ENCODE measurements at regions of chr11 and their contacts with region 1.

Region 1: DNA sequence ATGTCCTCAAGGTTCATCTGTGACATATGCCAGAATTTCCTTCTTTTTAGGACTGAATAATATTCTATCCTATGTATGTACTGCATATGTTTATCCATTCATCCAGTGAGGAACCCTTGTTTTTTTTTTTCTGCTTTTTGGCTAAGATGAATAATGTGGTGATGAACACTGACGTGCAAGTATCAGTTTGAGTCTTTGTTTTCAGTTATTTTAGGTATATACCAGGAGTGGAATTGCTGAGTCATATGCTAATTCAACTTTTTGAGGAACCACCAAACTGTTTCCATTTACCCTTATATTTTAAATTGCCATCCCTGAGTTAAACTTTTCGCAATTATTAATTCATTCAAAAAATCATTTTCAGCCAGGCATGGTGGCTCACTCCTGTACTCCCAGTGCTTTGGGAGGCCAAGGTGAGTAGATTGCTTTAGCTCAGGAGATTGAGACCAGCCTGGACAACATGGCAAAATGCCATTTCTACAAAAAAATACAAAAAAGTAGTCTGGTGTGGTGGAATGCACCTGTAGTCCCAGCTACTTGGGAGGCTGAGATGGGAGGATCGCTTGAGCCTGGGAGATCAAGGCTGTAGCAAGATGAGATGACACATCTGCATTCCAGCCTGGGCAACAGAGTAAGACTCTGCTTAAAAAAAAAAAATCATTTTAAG is 64.2 kb downstream of the MICAL2 start:
- DNase-seq: no peak
- H3K4me3 Mint-ChIP-seq: peak overlapping the region; percentile 27
- H3K27ac Mint-ChIP-seq: peak overlapping the region; percentile 93
- H3K4me1 Mint-ChIP-seq: peaks cover 68% of the 10 kb centered on the region
- H3K27me3 Mint-ChIP-seq: no peaks in the 10 kb centered on the region

Region 2: DNA sequence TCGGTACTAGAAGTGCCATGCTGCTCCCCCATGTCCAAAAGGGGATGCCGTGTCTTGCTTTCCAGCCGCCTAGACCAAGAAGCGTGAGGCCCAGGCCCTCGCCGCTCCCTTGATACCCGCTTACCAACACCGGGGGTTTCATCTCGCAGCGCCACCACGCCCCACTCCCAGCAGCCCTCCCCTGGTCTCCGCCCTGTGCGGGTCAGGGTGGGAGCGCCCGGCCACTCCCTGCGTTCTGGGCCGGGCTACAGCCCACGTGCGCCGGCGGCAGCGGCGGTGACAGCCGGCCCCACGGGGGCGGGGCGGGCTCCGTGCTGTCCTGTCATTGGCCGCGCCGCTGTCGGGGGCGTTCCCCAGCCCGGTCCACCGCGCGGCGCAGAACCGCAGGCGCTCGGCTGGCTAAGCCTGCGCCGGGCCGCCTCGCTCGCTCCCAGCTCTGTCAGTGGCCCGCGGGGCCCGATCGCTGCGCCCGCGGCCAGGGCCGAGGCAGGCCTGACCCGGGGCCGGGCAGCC is 64.4 kb before region 1 on chr11 and contains the start of gene MICAL2:
- CTCF ChIA-PET with region 1: no interaction called
- POLR2A ChIA-PET with region 1: no interaction called
- intact Hi-C with region 1: loop called (anchors 1 kb)
- DNase-seq: peak; percentile 91
- H3K4me3 Mint-ChIP-seq: peak within 1 kb of the TSS; percentile 82
- H3K27ac Mint-ChIP-seq: peak within 1 kb of the TSS; percentile 91
- H3K4me1 Mint-ChIP-seq: peaks cover 40% of the 10 kb centered on the region
- H3K27me3 Mint-ChIP-seq: no peaks in the 10 kb centered on the region
- total RNA-seq, gene MICAL2: 213 to 220 TPM

Region 3: GRCh38 chr11:12200279-12201010 is 25.8 kb after region 1 on chr11:
- CTCF ChIA-PET with region 1: interaction called, 4 read pairs
- POLR2A ChIA-PET with region 1: interaction called, 17 read pairs
- intact Hi-C with region 1: no loop called
- DNase-seq: peak; percentile 72
- H3K4me3 Mint-ChIP-seq: peak overlapping the region; percentile 26
- H3K27ac Mint-ChIP-seq: peak overlapping the region; percentile 98
- H3K4me1 Mint-ChIP-seq: peaks cover 89% of the 10 kb centered on the region
- H3K27me3 Mint-ChIP-seq: no peaks in the 10 kb centered on the region

Region 4: GRCh38 chr11:12207384-12208150 is 33.0 kb after region 1 on chr11:
- CTCF ChIA-PET with region 1: interaction called, 3 read pairs
- POLR2A ChIA-PET with region 1: interaction called, 6 read pairs
- intact Hi-C with region 1: loop called (anchors 1 kb)
- DNase-seq: peak; percentile 84
- H3K4me3 Mint-ChIP-seq: peak overlapping the region; percentile 14
- H3K27ac Mint-ChIP-seq: peak overlapping the region; percentile 87
- H3K4me1 Mint-ChIP-seq: peaks cover 69% of the 10 kb centered on the region
- H3K27me3 Mint-ChIP-seq: no peaks in the 10 kb centered on the region